Prostate gland (tissue), 2 donors: ENCODE measurements at regions of chr4 and their contacts with region 1.

Region 1: DNA sequence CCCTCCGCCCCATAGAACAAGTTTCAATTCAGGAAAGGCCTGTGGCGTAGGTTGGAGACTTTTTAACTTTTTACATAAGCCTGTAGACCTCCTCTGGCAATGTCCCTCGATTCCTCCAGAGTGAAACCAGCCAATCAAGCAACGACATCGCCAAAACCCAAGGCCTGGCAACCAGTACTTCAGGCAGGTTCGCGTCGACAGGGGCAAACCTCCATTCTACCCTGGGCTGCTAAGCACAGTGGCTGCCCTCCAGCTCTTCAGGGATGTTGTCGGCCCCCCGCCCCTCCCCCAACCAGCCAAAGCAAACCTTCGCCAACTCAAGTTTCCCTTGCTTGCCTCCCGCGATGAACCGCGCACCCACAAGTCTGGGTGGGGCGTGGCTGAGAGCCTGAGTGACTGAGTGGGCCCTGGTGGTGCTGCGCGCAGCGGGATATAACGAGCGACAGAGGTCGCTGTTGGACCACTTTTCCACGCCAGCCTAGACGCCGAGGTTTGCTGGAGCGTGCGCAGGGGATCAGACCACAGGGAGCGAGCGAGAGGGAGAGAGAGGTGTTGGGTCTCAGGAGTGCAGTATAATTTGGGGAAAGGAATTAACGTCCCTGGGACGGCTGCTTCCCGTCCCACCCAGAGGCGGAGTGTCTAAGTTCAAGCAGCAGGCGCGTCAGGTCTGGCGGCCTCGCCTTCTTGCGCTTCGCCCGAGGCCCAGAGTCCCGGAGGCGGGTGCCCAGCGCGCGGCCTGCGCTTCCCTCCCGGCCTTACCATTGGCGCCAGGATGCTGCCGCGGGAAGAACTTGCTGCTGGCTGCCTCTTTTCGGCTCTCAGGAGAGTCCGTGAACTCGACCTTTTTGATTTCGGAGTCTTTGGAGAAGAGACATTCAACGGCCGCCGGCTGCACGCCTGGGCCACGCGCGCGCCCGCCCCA is 9.0 kb upstream of the PITX2 start:
- DNase-seq: peak; percentile 44
- H3K4me3 ChIP-seq: peak overlapping the region in 1 of 2 donors; percentile 3
- H3K27ac ChIP-seq: no peak overlapping the region
- H3K4me1 ChIP-seq: no peaks in the 10 kb centered on the region
- H3K27me3 ChIP-seq: peaks cover 76% of the 10 kb centered on the region
- CTCF ChIP-seq: peak; percentile 21 to 67 (median 48)
- POLR2A ChIP-seq: no peak

Region 2: DNA sequence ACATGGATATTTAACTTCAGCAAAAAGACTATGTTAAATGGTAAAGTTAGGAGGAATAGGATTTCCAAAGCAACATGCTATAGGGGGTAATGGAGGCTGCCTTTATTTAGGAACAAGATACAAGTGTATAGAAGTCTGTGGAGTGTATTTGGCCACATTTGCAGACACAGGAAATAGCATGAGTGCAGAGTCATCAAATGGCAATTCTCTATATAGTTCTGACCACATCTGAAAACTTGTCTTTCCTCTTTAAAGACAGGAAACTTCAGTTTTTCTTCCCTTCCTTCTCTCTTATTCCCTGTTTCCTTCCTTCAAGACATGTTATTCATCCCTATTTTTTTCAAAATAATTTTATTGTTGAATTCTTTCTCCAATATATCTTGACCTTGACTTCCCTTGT is 110.3 kb after region 1 on chr4:
- intact Hi-C with region 1: no loop called
- DNase-seq: no peak
- H3K4me3 ChIP-seq: no peak overlapping the region
- H3K27ac ChIP-seq: no peak overlapping the region
- H3K4me1 ChIP-seq: no peaks in the 10 kb centered on the region
- H3K27me3 ChIP-seq: no peaks in the 10 kb centered on the region
- CTCF ChIP-seq: no peak
- POLR2A ChIP-seq: no peak

Region 3: DNA sequence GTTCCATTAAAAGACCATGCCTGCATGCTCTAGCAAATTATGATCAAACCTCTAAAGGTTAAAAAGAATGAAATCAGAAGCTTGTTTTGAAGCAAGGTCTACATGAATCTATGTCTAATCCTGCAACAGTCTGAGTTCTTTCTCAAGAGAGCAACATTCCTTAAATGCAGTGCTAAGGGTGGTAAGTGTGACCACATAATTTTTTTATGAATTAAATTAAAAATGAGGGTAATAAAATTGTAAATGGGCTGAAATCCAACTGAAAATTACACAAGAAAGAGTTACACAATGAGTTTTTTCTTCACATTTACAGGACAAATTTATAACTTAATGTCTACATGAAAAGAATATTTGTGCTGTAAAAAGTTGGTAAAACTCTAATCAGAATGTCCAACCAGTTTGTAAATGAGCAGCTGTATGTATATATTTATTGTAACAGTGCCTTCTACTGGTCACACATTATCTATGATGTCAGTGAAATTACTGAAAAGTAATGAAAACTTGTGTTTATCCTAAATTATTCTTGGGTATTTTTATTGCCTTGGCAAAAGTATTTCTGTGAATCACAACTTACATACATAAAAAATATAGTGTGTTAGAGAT is 327.3 kb after region 1 on chr4:
- intact Hi-C with region 1: loop called (anchors 5 kb)
- DNase-seq: no peak
- H3K4me3 ChIP-seq: no peak overlapping the region
- H3K27ac ChIP-seq: no peak overlapping the region
- H3K4me1 ChIP-seq: no peaks in the 10 kb centered on the region
- H3K27me3 ChIP-seq: no peaks in the 10 kb centered on the region
- CTCF ChIP-seq: no peak
- POLR2A ChIP-seq: no peak

Region 4: DNA sequence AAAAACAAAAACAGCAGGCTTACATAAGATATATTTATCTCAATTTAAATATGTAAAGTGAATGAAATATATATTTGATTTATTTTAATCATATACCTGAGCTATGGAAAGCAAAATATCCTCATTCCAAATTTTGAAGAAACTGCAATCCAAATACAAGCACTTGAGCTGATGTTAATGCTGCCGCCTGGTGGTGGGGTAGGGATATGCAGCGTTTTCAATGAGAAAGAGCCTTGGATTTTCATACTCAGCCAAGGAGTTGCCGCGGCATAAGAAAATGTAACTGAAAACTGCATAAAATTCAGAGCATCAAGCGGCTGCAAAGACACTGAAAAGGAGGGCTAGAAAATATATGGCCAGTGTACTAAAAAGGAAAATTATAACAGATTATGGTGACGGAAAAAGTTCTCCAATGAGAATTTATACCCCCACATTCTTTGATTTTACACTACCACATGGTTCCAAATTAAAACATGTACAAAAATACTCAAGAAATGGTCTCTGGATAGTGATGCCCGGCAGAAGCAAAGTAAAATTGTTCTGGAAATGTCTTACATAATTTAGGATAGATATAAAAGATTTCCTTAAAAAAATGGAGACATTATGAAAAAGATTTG is 651.3 kb after region 1 on chr4:
- intact Hi-C with region 1: loop called (anchors 5 kb)
- DNase-seq: peak; percentile 13
- H3K4me3 ChIP-seq: no peak overlapping the region
- H3K27ac ChIP-seq: no peak overlapping the region
- H3K4me1 ChIP-seq: no peaks in the 10 kb centered on the region
- H3K27me3 ChIP-seq: no peaks in the 10 kb centered on the region
- CTCF ChIP-seq: peak; percentile 45 to 61 (median 54)
- POLR2A ChIP-seq: no peak

Region 5: GRCh38 chr4:111475001-111475400 is 843.2 kb after region 1 on chr4:
- intact Hi-C with region 1: loop called (anchors 2 kb)
- DNase-seq: no peak
- H3K4me3 ChIP-seq: no peak overlapping the region
- H3K27ac ChIP-seq: no peak overlapping the region
- H3K4me1 ChIP-seq: no peaks in the 10 kb centered on the region
- H3K27me3 ChIP-seq: no peaks in the 10 kb centered on the region
- CTCF ChIP-seq: no peak
- POLR2A ChIP-seq: no peak

Region 6: DNA sequence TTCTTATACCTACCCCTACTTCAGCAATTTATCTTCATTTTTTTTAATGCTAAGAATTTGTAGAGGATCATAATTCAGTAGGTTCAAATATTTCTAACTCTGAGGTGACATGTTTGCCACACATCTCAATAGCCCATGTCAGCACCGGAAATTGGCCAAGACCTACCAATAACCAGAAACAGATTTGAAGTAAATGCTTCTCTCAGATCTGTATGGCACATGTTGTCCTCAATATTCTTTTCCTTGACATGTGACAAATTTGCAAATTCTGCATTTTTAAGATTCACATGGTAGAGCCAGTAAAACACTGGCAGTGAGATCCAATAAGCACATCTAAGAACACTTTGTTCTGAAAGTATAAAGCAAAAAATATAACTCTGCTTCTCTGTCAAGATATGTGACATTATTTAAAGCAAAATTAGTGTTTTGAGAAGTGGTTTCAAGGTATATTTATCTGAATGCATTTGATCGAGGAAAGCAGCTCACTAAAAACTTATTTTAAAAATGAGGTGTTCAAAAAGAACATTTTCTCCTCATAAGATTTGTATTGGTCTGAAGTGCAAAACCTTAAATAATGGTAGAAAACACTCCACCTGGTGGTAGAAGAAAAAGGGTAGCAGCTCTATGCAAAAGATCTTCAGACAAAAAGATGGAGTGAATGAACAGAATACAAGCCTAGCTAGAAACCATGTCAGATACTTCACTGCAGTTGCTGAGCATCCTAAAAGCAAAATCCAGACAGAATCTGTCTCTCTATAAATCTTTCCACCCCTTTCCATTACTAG is 999.6 kb after region 1 on chr4:
- intact Hi-C with region 1: loop called (anchors 5 kb)
- DNase-seq: no peak
- H3K4me3 ChIP-seq: no peak overlapping the region
- H3K27ac ChIP-seq: no peak overlapping the region
- H3K4me1 ChIP-seq: no peaks in the 10 kb centered on the region
- H3K27me3 ChIP-seq: no peaks in the 10 kb centered on the region
- CTCF ChIP-seq: no peak
- POLR2A ChIP-seq: no peak